PC-9 (cell line): ENCODE measurements at regions of chr7 and their contacts with region 1.

Region 1: GRCh38 chr7:1086588-1087464 is 1.1 kb upstream of the GPER1 start:
- DNase-seq: peak in 1 of 2 experiments; percentile 70
- H3K4me3 ChIP-seq: no peak overlapping the region
- H3K27ac ChIP-seq: no peak overlapping the region
- H3K4me1 ChIP-seq: 0 out of 2 replicates have a peak, but pooled peaks cover 4% of the 10 kb centered on the region
- H3K27me3 ChIP-seq: no peaks in the 10 kb centered on the region
- CTCF ChIP-seq: peak; percentile 97

Region 2: GRCh38 chr7:1137510-1138167 is 50.8 kb after region 1 on chr7:
- CTCF ChIA-PET with region 1: no interaction called
- POLR2A ChIA-PET with region 1: no interaction called
- intact Hi-C with region 1: loop called (anchors 5 kb)
- DNase-seq: no peak
- H3K4me3 ChIP-seq: peak overlapping the region; percentile 74
- H3K27ac ChIP-seq: no peak overlapping the region; the same call in 1 of the 2 replicates
- H3K4me1 ChIP-seq: peaks cover 19% of the 10 kb centered on the region
- H3K27me3 ChIP-seq: no peaks in the 10 kb centered on the region
- CTCF ChIP-seq: no peak

Region 3: GRCh38 chr7:1175967-1176851 is 89.4 kb after region 1 on chr7:
- CTCF ChIA-PET with region 1: no interaction called
- POLR2A ChIA-PET with region 1: no interaction called
- intact Hi-C with region 1: loop called (anchors 1 kb)
- DNase-seq: peak; percentile 71 to 94
- H3K4me3 ChIP-seq: peak overlapping the region; percentile 41; the same call in 1 of the 2 replicates
- H3K27ac ChIP-seq: no peak overlapping the region
- H3K4me1 ChIP-seq: peaks cover 11% of the 10 kb centered on the region
- H3K27me3 ChIP-seq: 0 out of 2 replicates have a peak, but pooled peaks cover 10% of the 10 kb centered on the region
- CTCF ChIP-seq: peak; percentile 99

Region 4: DNA sequence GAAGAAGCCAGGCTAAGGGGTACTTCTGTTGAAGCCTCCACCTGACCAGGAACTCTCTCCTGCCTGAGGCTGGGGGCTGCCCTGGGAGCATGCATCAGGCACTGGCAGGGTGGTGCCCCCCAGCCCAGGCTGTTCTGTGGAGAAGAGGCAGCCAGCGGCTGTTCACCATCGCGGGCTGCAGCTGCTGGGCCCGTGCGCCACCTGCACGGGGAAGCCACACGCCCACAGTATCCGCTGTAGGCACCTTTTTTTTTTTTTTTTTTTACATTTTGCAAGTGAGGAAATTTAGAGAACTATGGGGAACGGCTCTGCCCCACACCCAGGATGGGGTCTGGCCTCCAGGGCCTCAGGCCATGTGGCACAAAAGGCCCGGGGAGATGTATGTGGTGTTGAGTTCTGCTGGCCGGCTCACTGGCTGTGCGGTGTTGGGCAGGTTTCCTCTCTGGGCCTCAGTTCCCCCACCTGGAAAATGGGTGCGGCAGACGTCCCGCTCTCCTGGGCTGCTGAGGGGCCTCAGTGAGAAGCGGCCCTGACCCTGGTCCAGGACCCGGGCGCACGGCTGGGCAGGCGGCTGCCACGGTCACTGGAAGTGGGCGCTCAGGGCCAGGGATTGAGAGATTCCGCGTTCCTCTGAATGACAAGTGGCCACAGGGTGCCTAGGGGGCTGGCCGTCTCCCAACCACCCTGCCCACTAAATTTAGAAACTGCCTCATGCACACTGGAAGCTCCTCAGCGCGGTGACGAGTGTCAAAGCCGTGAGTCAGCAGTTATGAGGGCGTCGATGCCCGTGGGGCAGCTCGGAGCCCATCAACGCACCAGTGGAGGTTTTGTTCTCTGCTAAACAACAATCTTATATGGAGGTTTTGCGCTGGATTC is 426.2 kb after region 1 on chr7:
- CTCF ChIA-PET with region 1: interaction called, 12 read pairs
- POLR2A ChIA-PET with region 1: no interaction called
- intact Hi-C with region 1: no loop called
- DNase-seq: peak; percentile 96
- H3K4me3 ChIP-seq: no peak overlapping the region
- H3K27ac ChIP-seq: peak overlapping the region; percentile 77
- H3K4me1 ChIP-seq: peaks cover 48% of the 10 kb centered on the region
- H3K27me3 ChIP-seq: no peaks in the 10 kb centered on the region
- CTCF ChIP-seq: no peak

Region 5: GRCh38 chr7:1938788-1939433 is 852.1 kb after region 1 on chr7:
- CTCF ChIA-PET with region 1: no interaction called
- POLR2A ChIA-PET with region 1: no interaction called
- intact Hi-C with region 1: no loop called
- DNase-seq: no peak
- H3K4me3 ChIP-seq: no peak overlapping the region
- H3K27ac ChIP-seq: no peak overlapping the region
- H3K4me1 ChIP-seq: no peaks in the 10 kb centered on the region
- H3K27me3 ChIP-seq: no peaks in the 10 kb centered on the region
- CTCF ChIP-seq: no peak